H1 (cell line): ENCODE measurements at regions of chr12 and their contacts with region 1.

Region 1: GRCh38 chr12:120292661-120293531 is at the start of gene RNU4-1:
- DNase-seq: peak; percentile 75 to 80
- H3K4me3 ChIP-seq: peak within 1 kb of the TSS; percentile 72 to 91 (median 73)
- H3K27ac ChIP-seq: peak within 1 kb of the TSS; percentile 100
- H3K4me1 ChIP-seq: peaks cover 4% of the 10 kb centered on the region in 4 experiments; a peak in 6 of 7 replicates
- H3K27me3 ChIP-seq: no peaks in the 10 kb centered on the region
- CTCF ChIP-seq: no peak
- EP300 ChIP-seq: peak in 1 of 2 experiments; percentile 22; a peak in 1 of 3 replicates
- POLR2A ChIP-seq: peak; percentile 100
- RAD21 ChIP-seq: no peak
- total RNA-seq, gene RNU4-1: 1,424 and 1,786 TPM in 2 replicates

Region 2: GRCh38 chr12:120116792-120117651 is 175.9 kb before region 1 on chr12:
- CTCF ChIA-PET with region 1: no interaction called
- POLR2A ChIA-PET with region 1: interaction called, 27 read pairs
- DNase-seq: peak; percentile 85 to 99
- H3K4me3 ChIP-seq: peak overlapping the region; percentile 63 to 93 (median 89)
- H3K27ac ChIP-seq: no peak overlapping the region; the same call in 1 of the 2 replicates
- H3K4me1 ChIP-seq: peaks cover 5 to 14% (median 9%) of the 10 kb centered on the region in 4 experiments; a peak in 6 of 7 replicates
- H3K27me3 ChIP-seq: no peaks in the 10 kb centered on the region
- CTCF ChIP-seq: no peak
- EP300 ChIP-seq: no peak
- POLR2A ChIP-seq: peak in 1 of 2 experiments; percentile 57; a peak in 2 of 3 replicates
- RAD21 ChIP-seq: no peak

Region 3: DNA sequence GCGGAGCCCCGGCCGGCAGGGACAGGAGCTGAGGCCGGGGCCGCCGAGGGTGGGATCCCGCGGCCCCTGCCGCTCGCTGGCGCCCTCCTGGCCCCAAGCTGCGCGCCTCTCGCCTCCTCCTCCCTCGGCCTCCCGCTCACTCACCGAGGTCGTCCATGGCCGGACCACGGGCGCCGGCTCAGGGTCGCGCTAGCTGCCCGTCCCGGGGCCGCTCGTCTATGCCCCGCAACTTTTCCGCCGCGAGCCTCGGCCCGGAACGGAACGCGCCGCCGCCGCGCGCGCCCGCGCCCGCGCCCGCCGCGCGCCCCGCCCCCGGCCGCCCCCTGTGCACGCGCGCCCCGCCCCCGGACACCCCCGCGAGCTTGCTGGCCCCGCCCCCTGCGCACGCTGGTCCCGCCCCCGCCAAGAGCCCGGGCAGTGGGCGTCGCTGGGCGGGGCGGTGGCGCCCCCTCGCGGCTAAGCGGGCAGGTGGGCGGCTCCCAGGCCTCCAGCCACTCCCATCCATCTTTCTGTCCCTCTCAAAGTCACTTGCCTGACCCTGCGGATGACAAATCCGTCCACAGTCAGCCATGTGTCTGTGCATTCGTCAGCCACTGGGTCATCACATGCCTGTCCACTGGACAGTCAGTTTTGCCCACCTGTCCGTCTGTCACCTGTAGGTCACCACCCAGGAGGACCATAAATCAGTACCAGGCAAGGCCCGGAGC is 27.3 kb before region 1 on chr12 and contains the start of gene PXN:
- CTCF ChIA-PET with region 1: interaction called, 16 read pairs
- POLR2A ChIA-PET with region 1: interaction called, 4,270 read pairs
- DNase-seq: peak in 1 of 2 experiments; percentile 97
- H3K4me3 ChIP-seq: peak within 1 kb of the TSS; percentile 65 to 85 (median 80)
- H3K27ac ChIP-seq: peak within 1 kb of the TSS; percentile 83
- H3K4me1 ChIP-seq: peaks cover 15 to 29% (median 19%) of the 10 kb centered on the region in 4 experiments
- H3K27me3 ChIP-seq: no peaks in the 10 kb centered on the region
- CTCF ChIP-seq: peak; percentile 79 to 91 (median 91)
- EP300 ChIP-seq: no peak
- POLR2A ChIP-seq: peak in 1 of 2 experiments; percentile 70; a peak in 2 of 3 replicates
- RAD21 ChIP-seq: peak; percentile 87 to 91
- total RNA-seq, gene PXN: 105 and 109 TPM in 2 replicates

Region 4: DNA sequence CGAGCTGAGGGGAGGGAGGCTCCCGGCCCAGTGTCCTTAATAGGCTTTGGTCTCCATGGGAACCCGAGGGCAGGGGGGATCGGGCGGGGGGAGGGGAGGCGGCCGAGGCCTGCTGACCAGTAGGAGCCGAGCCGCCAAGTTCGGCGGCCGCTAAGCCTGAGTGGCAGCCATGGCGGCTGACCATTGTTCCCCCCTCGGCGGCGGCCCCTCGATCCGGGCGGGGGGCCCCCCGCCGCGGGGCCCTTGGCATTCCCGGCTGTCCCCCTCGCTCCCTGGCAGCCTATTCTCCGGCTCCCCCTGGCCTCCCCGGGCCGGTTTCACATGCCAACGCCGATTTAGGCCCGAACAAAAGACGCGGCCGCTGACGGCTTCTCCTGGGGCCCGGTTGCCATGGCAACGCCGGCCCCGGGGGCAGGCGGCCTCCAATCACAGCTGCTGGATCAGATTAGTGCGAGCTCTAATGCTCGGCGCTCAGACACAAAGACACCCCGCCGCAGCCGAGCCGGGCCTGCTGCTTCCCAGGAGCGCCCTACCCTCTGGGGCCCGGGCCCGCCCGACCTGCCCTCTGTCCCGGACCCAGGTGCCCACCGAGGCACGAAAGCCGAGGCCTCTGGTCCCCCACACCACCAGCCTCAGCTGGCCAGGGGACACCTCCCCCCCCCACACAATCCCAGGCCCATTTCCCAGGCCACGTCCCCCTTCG is 68.8 kb after region 1 on chr12:
- CTCF ChIA-PET with region 1: no interaction called
- POLR2A ChIA-PET with region 1: interaction called, 22 read pairs
- DNase-seq: peak; percentile 91 to 93
- H3K4me3 ChIP-seq: peak overlapping the region in 3 of 4 experiments; percentile 33 to 53 (median 43); a peak in 5 of 8 replicates
- H3K27ac ChIP-seq: peak overlapping the region; percentile 79
- H3K4me1 ChIP-seq: peaks cover 18 to 36% (median 28%) of the 10 kb centered on the region in 4 experiments
- H3K27me3 ChIP-seq: no peaks in the 10 kb centered on the region
- CTCF ChIP-seq: no peak
- EP300 ChIP-seq: peak in 1 of 2 experiments; percentile 57; a peak in 1 of 3 replicates
- POLR2A ChIP-seq: peak in 1 of 2 experiments; percentile 44; a peak in 1 of 3 replicates
- RAD21 ChIP-seq: peak in 1 of 2 experiments; percentile 1; a peak in 2 of 4 replicates

Region 5: DNA sequence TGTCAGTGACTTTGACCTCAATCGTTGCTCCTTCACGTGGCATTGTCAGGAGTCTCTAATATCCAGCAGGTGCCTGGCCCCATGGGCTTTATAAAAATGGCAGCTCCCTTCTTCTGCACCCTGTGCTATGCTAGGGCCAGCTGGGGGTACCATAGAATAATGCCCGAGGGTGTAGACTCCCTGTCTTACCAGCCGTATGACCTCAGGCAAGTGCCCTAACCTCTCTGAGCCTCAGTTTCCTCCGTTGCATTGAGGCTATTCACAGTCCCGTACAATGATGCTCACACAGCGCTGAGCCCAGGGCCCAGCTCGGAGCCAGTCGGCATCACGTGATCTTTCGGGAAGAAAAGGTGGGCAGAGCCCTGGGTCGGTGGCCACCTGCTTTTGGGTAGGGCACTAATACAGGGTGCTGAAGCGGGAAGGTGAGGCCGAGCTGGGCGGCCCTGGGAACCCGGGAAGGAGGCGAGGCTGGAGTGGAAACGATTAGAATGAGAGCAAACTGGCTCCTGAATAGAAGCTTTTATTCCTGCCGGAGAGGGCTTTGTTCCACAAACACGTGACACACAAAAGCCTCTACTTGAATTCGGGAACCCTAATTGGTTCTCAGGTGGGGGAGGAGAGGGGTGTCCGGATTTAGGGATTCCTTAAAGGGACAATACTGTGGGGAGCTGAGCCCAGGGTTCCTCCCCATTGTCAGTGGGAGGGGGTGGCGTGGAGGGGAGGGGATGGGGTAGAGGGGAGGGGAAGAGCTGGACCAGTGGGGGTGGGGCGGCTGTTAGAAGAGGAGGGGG is 96.0 kb after region 1 on chr12:
- CTCF ChIA-PET with region 1: no interaction called
- POLR2A ChIA-PET with region 1: interaction called, 12 read pairs
- DNase-seq: peak; percentile 71 to 88
- H3K4me3 ChIP-seq: peak overlapping the region; percentile 7 to 42 (median 19); a peak in 5 of 8 replicates
- H3K27ac ChIP-seq: peak overlapping the region; percentile 53; the same call in 1 of the 2 replicates
- H3K4me1 ChIP-seq: peaks cover under 1 to 21% (median 9%) of the 10 kb centered on the region in 4 experiments
- H3K27me3 ChIP-seq: no peaks in the 10 kb centered on the region
- CTCF ChIP-seq: no peak
- EP300 ChIP-seq: peak in 1 of 2 experiments; percentile 43; a peak in 1 of 3 replicates
- POLR2A ChIP-seq: peak in 1 of 2 experiments; percentile 50; a peak in 2 of 3 replicates
- RAD21 ChIP-seq: no peak

Region 6: DNA sequence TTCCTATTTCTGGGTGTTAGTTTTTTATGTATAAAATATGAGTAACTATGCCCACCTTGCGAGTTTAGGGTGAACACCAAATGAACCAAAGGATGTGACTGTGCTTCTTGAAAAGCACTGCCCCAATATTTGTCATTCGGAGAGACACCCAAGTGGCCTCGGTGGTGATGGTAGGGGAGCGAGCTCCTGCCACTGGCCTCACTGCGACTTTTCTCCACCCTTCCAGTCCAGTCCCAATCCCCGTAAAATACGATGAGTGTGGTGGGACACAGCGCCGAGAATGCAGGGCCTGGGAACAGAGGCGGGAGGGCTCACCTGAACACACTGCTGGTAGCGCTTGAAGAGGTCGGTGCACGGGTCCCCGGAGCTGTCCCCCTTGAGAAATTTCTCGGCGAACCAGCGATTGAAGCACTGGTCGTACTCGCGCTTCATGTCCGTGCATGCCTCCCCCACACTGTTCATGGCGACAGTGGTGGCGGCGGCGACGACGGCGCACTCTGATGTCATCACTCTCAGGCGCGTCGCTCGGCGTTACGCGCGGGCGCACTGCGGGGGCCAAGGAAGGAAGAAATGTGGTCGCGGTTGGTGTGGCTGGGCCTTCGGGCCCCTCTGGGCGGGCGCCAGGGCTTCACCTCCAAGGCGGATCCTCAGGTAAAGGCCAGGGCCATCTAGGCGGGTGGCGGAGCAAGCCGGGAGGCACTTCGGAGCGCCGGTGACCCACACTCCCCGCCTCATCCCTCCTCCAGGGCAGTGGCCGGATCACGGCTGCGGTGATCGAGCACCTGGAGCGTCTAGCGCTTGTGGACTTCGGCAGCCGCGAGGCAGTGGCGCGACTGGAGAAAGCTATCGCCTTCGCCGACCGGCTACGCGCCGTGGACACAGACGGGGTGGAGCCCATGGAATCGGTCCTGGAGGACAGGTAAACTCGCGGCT is 153.3 kb after region 1 on chr12 and contains the starts of genes GATC and TRIAP1:
- CTCF ChIA-PET with region 1: no interaction called
- POLR2A ChIA-PET with region 1: interaction called, 16 read pairs
- DNase-seq: peak in 1 of 2 experiments; percentile 99
- H3K4me3 ChIP-seq: peak within 1 kb of the TSS; percentile 84 to 98 (median 98)
- H3K27ac ChIP-seq: peak within 1 kb of the TSS; percentile 94
- H3K4me1 ChIP-seq: peaks cover 0 to 3% (median 1%) of the 10 kb centered on the region in 4 experiments; a peak in 1 of 7 replicates
- H3K27me3 ChIP-seq: no peaks in the 10 kb centered on the region
- CTCF ChIP-seq: no peak
- EP300 ChIP-seq: peak in 1 of 2 experiments; percentile 73; a peak in 1 of 3 replicates
- POLR2A ChIP-seq: peak; percentile 89 to 96
- RAD21 ChIP-seq: no peak
- total RNA-seq, gene GATC: 30.4 and 34.2 TPM in 2 replicates
- total RNA-seq, gene TRIAP1: 58.5 and 63.4 TPM in 2 replicates